ENCODE measurements at regions of chr22 and their contacts with region 1.

Region 1: GRCh38 chr22:42369245-42370041 is 62.8 kb downstream of the NFAM1 start:
- DNase-seq: peak; percentile 65
- H3K4me3 ChIP-seq: peak overlapping the region; percentile 41
- CTCF ChIP-seq: no peak

Region 2: GRCh38 chr22:42114721-42115120 is 254.7 kb before region 1 on chr22:
- in situ Hi-C with region 1: no loop called
- DNase-seq: no peak
- H3K4me3 ChIP-seq: no peak overlapping the region
- CTCF ChIP-seq: peak; percentile 37

Region 3: DNA sequence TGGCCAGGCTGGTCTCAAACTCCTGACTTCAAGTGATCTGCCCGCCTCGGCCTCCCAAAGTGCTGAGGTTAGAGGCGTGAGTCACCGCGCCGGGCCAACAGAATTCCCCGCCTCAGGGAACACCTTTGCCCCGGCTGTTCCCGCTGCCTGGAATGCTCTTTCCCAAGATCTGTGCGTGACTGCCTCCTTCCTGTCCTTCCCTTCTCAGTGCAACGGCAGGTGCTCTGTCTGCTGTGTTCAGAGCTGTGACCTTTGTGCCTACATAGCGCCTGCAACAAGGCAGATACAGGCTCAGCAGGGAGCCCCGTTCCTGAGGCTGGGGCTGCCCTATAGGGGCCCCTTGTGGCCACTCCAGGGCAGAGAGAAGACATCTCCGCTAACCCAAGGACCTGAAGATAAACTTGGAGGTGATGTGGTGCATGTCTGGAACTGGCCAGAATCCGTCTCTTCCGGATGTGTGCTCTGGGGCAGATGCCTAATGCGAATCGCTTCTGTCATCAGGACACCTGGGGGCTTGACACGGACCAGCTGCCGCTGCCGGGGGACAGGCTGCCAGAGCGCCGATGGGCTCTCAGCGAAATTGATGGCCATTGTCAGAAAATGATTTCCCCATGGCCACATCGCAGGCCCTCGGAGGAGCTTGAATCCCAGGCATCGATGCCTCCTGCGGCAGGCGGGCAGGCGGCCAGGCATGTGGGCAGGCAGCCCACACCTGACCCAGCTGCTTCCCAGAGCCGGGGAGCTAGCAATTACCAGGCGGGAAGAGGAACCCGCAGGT is 55.5 kb before region 1 on chr22:
- in situ Hi-C with region 1: no loop called
- DNase-seq: no peak
- H3K4me3 ChIP-seq: no peak overlapping the region
- CTCF ChIP-seq: peak; percentile 53

Region 4: GRCh38 chr22:42324990-42325710 is 44.3 kb before region 1 on chr22:
- in situ Hi-C with region 1: no loop called
- DNase-seq: no peak
- H3K4me3 ChIP-seq: no peak overlapping the region
- CTCF ChIP-seq: no peak

Region 5: GRCh38 chr22:42336527-42337227 is 32.8 kb before region 1 on chr22:
- in situ Hi-C with region 1: loop called (anchors 5 kb)
- DNase-seq: no peak
- H3K4me3 ChIP-seq: no peak overlapping the region
- CTCF ChIP-seq: no peak

Region 6: GRCh38 chr22:42444077-42444904 is 74.8 kb after region 1 on chr22:
- in situ Hi-C with region 1: loop called (anchors 5 kb)
- DNase-seq: peak; percentile 73
- H3K4me3 ChIP-seq: peak overlapping the region; percentile 31
- CTCF ChIP-seq: peak; percentile 76

Measured in astrocyte of the cerebellum (primary cell).